ENCODE measurements at regions of chr19 and their contacts with region 1.

Region 1: DNA sequence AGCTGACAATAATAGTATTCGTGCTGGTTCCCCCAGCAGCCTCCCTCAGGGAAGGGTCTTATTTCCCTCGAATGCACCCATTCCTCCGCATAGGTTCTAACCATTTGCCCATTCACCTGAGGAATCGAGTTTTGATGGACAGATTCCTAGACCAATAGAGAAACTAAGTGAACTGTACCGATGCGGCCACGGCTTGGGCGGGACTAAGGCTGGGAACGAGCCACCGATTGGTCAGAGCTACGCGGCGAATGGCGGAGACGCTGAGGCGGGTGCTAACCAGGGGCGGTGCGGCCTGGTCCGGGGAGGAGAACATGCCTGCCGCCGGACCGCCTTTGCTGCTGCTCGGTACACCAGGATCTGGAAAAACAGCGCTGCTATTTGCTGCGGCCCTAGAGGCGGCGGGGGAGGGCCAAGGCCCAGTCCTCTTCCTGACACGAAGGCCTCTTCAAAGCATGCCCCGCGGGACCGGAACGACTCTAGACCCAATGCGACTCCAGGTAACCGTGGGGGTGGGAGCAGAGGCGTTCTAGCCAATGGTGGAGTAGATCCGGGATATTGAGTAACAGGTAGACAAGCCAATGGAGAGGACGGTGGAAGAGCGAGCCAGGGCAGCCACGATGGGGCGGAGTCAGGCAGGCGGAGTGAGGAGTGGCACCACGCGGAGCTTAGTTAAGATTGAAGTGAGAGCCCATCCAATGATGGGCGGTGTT is at the start of gene SWSAP1:
- DNase-seq: peak; percentile 99
- ATAC-seq: peak; percentile 97
- total RNA-seq, gene SWSAP1: 1.9 TPM

Region 2: DNA sequence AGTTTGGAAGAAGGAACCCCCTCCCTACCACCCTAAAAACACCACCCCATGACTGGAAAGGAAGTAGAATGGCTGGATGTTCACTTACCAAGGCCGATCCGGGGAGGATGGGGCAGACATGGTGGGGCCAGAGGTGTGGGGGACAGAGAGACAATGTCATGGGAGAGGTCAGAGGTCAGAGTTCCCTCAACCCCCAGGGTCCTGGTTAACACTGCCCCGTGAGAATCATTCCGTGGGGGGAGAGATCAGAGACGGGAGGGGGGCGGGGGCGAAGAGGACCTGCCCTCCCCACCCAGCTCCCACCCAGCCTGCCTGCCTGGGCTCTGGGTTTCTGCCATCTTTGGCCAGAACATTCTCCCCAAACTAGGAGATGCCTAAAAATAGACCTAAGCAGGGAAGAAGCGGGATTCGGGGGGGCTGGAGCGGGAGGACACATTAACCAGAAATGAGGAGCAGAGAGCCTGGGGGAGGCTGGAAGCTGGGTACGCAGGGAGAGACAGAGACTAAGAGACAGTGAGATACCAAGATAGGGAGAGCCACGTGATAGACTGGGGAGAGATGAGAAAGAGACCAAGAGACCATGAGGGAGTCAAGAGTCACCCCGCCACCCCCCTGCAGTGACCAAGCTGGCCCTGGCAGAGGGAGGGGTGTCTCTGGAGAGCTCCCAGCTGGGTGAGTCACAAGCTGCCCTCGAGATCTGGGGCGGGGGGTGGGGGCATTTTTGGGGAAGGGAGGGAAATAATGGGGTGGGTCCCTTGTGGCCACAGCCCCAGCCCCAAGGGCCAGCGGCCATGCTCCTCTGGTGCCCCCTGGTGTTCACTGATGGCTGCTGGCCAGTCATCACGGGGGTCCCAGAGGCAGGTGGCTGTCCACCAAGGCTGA is 171.2 kb before region 1 on chr19:
- intact Hi-C with region 1: no loop called
- DNase-seq: peak; percentile 84
- ATAC-seq: peak; percentile 75

Region 3: DNA sequence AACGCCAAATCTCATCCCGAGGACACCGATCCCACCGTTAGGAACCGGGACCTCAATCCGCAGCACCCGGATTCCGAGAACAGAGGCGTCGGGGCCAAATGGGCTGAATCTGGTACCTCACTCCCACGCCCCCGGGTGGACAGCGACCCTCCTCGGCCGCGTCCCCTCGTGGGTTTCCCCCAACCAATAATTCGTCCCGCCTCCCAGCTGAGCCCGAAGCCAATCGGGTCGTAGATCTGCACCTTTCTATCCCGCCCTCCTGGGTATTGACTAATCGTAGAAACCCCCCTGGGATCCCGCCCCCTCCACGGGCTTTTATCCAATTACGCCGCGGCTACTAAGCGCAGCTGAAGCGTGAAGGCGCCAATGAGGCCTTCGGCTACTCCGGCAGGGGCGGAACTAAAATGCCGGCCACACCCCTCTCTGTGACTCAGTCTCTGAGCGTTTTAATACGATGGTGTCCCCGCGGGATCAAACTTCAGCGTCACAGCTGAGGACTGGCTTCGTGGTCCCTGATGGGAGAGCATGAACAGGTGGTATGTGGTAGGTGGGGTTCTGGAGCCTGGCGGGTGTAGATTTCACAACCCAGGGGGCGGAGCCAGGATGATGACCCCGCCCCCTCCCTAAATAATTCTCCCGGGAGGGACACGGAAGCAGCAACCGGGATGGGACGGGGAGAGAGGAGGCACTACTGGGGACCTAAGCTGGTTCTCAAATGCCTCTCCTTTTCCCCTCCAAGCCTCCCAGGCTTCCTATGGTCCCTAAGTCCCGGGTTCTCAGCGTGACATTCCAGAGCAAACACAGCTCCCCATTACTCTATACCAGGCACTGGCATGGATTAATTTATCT is 28.3 kb before region 1 on chr19 and contains the starts of genes CCDC159 and TMEM205:
- intact Hi-C with region 1: loop called (anchors 2 kb)
- DNase-seq: peak; percentile 98
- ATAC-seq: peak; percentile 95
- total RNA-seq, gene CCDC159: 17.1 TPM
- total RNA-seq, gene TMEM205: 106 TPM

Region 4: GRCh38 chr19:11435058-11435832 is 60.7 kb after region 1 on chr19 and contains the starts of genes ODAD3 and PRKCSH:
- intact Hi-C with region 1: loop called (anchors 2 kb)
- DNase-seq: peak; percentile 99
- ATAC-seq: peak; percentile 98
- total RNA-seq, gene ODAD3: 0.68 TPM
- total RNA-seq, gene PRKCSH: 123 TPM

Region 5: DNA sequence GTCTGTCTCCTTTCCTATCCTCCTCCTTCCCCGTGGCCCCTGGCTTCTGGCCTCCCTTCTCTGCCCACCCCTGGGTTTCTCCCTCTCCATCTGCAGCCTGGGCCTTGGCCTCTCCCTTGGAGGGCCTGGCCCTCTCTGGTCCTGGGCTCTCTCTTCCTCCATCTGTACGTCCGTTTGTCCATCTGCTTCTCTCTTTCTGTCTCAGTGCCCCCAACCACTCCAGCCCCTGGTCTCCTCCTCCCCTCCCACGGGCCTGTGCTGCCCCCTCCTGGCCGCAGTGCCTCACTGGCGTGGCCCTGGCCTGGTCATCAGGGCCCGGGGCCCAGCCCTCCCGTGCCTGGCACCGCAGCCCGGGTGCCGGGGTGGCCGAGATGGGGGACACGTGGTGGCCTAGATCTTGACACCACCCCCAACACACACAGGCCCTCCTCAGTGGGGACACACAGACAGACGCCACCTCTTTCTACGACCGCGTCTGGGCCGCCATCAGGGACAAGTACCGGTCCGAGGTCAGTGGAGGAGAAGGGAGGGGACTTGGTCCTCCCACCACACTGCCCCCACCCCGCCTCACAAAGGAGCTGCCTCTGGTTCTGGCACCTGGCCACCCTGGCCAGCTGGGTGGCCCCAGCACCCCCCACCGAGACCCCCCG is 72.2 kb after region 1 on chr19:
- intact Hi-C with region 1: loop called (anchors 5 kb)
- DNase-seq: peak; percentile 86
- ATAC-seq: peak; percentile 68

Region 6: GRCh38 chr19:11505032-11505503 is 130.5 kb after region 1 on chr19:
- intact Hi-C with region 1: loop called (anchors 5 kb)
- DNase-seq: peak; percentile 98
- ATAC-seq: peak; percentile 96

Measured in Right ventricle myocardium inferior (tissue), 1 donor.